Transverse colon (tissue), 4 donors: ENCODE measurements at regions of chr3 and their contacts with region 1.

Region 1: GRCh38 chr3:66831696-66832330 is 166.3 kb upstream of the KBTBD8 start:
- DNase-seq: no peak
- H3K4me3 ChIP-seq: no peak overlapping the region
- H3K27ac ChIP-seq: peak overlapping the region in 1 of 4 donors; percentile 18
- H3K4me1 ChIP-seq: peaks cover 0 to 20% (median 10%) of the 10 kb centered on the region in 4 donors
- H3K27me3 ChIP-seq: no peaks in the 10 kb centered on the region
- CTCF ChIP-seq: no peak
- EP300 ChIP-seq: no peak
- POLR2A ChIP-seq: no peak

Region 2: GRCh38 chr3:66211779-66212178 is 620.0 kb before region 1 on chr3:
- in situ Hi-C with region 1: no loop called
- intact Hi-C with region 1: no loop called
- DNase-seq: no peak
- H3K4me3 ChIP-seq: no peak overlapping the region
- H3K27ac ChIP-seq: no peak overlapping the region
- H3K4me1 ChIP-seq: no peaks in the 10 kb centered on the region
- H3K27me3 ChIP-seq: no peaks in the 10 kb centered on the region
- CTCF ChIP-seq: no peak
- EP300 ChIP-seq: no peak
- POLR2A ChIP-seq: no peak

Region 3: DNA sequence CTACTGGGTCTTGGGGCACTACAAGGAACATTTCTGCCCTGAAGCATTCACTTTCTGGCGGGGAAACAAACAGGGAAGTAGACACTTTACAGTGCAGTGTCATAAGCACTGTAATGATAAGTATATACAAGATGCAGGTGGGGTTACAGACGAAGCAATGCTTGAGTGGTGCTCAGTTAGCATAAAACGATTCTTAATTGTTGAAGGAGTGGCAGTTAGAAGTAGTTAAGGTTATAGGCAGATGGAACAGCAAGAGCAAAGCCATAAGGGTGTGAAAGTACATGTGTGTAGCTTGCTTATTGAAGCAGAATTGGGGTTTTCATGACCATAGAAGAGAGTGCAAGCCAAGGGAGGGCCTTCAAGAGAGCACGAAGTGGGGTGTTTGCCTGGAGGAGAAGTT is 564.8 kb before region 1 on chr3:
- in situ Hi-C with region 1: loop called in 1 of 4 experiments (anchors 10 kb)
- intact Hi-C with region 1: loop called (anchors 5 kb)
- DNase-seq: no peak
- H3K4me3 ChIP-seq: no peak overlapping the region
- H3K27ac ChIP-seq: peak overlapping the region in 2 of 4 donors; percentile 7 to 33
- H3K4me1 ChIP-seq: peaks cover 0 to 31% (median 7%) of the 10 kb centered on the region in 4 donors
- H3K27me3 ChIP-seq: no peaks in the 10 kb centered on the region
- CTCF ChIP-seq: no peak
- EP300 ChIP-seq: no peak
- POLR2A ChIP-seq: no peak

Region 4: GRCh38 chr3:66816090-66816761 is 15.6 kb before region 1 on chr3:
- in situ Hi-C with region 1: no loop called
- intact Hi-C with region 1: no loop called
- DNase-seq: no peak
- H3K4me3 ChIP-seq: no peak overlapping the region
- H3K27ac ChIP-seq: peak overlapping the region in 1 of 4 donors; percentile 18
- H3K4me1 ChIP-seq: peaks cover 0 to 13% (median 0%) of the 10 kb centered on the region in 4 donors
- H3K27me3 ChIP-seq: no peaks in the 10 kb centered on the region
- CTCF ChIP-seq: peak; percentile 57 to 81 (median 71)
- EP300 ChIP-seq: no peak
- POLR2A ChIP-seq: no peak